Ovary (tissue), 10 donors: ENCODE measurements at regions of chr9 and their contacts with region 1.

Region 1: DNA sequence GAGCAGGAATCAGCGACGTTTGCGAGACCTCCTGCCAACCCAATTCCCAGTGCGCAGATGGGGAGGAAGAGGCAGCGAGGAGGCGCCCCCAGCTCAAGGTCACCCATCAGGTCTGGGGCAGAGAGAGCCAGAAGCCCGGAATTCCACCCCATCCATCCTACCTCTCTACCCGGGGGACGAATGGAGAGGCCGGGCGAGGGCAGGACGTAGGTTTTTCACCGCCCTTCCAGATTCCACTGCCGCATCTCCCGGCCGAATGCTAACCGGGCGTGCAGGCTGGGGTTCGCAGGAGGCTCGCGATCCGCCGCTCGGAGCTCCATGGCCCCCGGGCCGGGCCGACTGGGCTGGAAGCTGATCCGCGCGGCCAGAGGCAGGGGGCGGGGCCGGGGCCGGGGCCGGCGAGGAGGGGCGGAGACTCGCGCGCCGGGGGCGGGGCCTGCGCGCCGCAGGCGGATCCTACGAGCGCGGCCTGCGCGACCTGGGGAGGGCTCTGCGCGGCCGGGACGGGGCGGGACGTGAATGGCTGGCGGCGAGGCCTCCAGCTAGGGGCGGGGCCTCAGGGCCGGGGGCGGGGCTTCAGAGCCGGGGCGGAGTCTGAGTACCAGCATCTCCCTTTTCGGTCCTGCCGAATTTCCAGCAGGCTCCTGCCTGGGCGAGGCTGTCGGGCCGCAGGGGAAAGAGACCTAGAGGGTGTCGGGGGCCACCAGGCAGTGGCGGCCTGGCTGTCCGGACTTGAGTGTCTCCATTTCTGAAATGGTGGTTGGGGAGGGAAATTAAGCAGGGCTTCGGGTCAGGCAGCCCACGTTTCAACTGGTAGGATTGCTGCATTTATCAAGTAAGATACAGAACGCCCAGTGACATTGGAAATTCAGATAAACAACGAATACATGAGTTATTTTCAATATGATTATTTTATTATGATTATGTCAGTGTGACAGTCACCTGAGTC is at the start of gene ST6GALNAC4:
- DNase-seq: peak; percentile 94 to 98 (median 97)
- H3K4me3 ChIP-seq: peak within 1 kb of the TSS; percentile 76
- H3K27ac ChIP-seq: peak within 1 kb of the TSS; percentile 39 to 69
- H3K4me1 ChIP-seq: peaks cover 6% of the 10 kb centered on the region
- H3K27me3 ChIP-seq: no peaks in the 10 kb centered on the region
- CTCF ChIP-seq: no peak
- EP300 ChIP-seq: peak; percentile 9
- POLR2A ChIP-seq: peak; percentile 64
- total RNA-seq, gene ST6GALNAC4: 29.5 to 58.4 (median 46.4) TPM

Region 2: DNA sequence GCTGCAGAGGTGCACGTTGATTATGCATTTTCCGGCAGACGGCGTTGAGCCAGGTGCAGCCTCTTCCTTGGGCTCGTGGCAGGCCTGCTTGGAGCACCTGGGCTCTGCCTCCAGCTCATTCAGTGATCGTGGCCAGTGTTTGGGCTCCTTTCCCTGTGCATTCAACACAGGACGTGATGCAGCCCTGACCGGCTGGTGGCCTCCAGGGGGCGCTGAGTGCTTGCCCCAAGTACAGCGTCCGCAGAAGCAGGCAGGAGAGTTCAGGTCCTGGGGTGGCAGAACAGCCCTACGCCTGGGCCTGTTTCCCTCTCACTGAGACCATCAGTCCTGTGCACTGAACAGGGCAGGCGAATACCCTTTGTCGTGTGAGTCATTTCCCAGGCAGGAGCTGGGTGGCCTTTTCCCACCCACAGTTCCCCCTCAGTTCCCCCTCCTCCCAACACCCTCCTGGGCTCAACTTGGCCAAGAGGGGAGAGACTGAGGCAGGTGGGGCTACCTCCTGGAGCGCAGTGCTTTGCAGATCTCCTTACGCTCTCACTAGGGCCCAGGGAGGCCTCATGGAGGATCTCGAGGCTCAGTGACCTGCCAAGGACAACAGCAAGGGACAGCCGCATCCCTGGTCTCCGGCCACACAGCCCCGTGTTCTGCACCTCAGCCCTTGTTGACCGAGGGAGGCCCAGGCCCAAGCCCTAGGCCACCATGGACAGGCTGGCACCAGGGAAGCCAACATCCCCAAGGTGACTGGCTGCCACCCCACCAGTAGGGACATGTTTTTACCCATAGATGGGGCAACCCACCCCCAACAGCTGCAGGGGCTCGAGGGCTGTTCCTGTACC is 412.8 kb before region 1 on chr9:
- intact Hi-C with region 1: loop called in 3 of 4 experiments (anchors 5 to 10 kb)
- DNase-seq: peak; percentile 83 to 92 (median 89)
- H3K4me3 ChIP-seq: no peak overlapping the region
- H3K27ac ChIP-seq: peak overlapping the region in 1 of 2 donors; percentile 29
- H3K4me1 ChIP-seq: peaks cover 2% of the 10 kb centered on the region
- H3K27me3 ChIP-seq: no peaks in the 10 kb centered on the region
- CTCF ChIP-seq: peak; percentile 87 to 94 (median 92)
- EP300 ChIP-seq: no peak
- POLR2A ChIP-seq: no peak

Region 3: GRCh38 chr9:127734747-127735529 is 182.0 kb before region 1 on chr9 and contains the start of gene TOR2A:
- intact Hi-C with region 1: loop called (anchors 2 to 5 kb)
- DNase-seq: peak; percentile 95 to 98 (median 98)
- H3K4me3 ChIP-seq: peak within 1 kb of the TSS; percentile 88
- H3K27ac ChIP-seq: peak within 1 kb of the TSS; percentile 80 to 88
- H3K4me1 ChIP-seq: peaks cover 6% of the 10 kb centered on the region
- H3K27me3 ChIP-seq: no peaks in the 10 kb centered on the region
- CTCF ChIP-seq: peak; percentile 92 to 100 (median 100)
- EP300 ChIP-seq: no peak
- POLR2A ChIP-seq: peak; percentile 93
- total RNA-seq, gene TOR2A: 8.8 to 12.2 (median 9.9) TPM

Region 4: DNA sequence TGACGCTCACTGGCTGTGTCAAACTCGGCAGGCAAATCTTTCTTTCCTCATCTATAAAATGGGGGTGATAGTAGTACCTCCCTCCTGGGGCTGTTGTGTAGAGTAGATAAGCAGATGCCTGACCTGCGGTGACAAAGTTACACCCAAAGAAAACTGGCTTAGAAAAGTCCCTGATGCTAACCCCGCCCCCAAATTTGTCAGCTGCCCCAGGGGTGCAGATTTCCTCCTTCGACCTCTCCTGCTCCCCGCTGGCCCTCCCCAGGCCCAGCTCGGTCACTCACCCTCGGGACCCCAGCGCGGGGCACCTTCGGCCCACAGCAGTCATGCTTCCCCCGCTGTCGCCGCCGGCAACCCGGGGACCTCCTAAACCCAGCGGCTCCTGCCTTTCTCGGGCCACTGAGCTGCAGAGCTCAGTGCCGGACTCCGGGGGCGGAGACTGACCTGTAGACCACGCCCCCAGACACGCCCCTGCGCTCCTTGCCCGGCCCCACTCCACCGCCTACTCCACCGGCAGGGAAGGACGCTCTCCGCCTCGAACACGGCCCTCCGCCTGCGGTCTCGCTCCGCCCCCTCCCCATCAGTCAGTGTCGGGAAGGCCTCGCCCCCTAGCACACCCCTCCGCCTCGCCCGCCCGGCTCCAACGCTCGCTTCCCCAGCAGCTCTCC is 145.9 kb before region 1 on chr9:
- intact Hi-C with region 1: no loop called
- DNase-seq: peak; percentile 99
- H3K4me3 ChIP-seq: peak overlapping the region; percentile 50
- H3K27ac ChIP-seq: peak overlapping the region in 1 of 2 donors; percentile 26
- H3K4me1 ChIP-seq: peaks cover 7% of the 10 kb centered on the region
- H3K27me3 ChIP-seq: no peaks in the 10 kb centered on the region
- CTCF ChIP-seq: no peak
- EP300 ChIP-seq: no peak
- POLR2A ChIP-seq: no peak

Region 5: GRCh38 chr9:127785023-127785932 is 131.7 kb before region 1 on chr9:
- intact Hi-C with region 1: loop called in 2 of 4 experiments (anchors 5 kb)
- DNase-seq: peak; percentile 86 to 93 (median 92)
- H3K4me3 ChIP-seq: peak overlapping the region; percentile 100
- H3K27ac ChIP-seq: peak overlapping the region; percentile 95 to 96
- H3K4me1 ChIP-seq: peaks cover 11% of the 10 kb centered on the region
- H3K27me3 ChIP-seq: no peaks in the 10 kb centered on the region
- CTCF ChIP-seq: peak; percentile 92 to 96 (median 95)
- EP300 ChIP-seq: no peak
- POLR2A ChIP-seq: peak; percentile 11

Region 6: DNA sequence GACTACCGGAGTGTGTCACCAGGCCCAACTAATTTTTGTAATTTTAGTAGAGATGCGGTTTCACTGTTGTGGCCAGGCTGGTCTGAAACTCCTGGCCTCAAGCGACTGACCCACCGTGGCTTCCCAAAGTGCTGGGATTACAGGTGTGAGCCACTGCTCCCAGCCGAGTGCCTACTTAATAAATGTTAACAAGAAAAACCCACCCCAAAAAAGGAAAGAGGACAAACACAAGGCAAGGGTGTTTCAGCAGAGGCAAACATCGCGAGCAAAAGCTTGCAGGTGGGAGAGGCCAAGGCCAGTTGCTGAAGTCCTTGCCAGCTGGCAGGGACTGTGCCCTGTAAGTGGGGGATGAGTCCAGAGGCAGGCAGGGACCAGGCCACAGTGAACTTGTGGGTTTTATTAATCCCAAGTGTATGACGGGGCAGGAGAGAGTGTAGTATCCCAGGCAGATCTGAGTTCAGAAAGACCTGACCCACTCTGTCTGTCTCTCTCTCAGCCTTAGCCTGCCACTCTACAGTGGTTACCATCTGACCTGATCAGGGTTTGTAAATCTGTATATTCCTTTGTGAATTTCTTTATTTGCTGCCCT is 120.6 kb before region 1 on chr9:
- intact Hi-C with region 1: loop called in 1 of 4 experiments (anchors 5 kb)
- DNase-seq: peak; percentile 90 to 93 (median 92)
- H3K4me3 ChIP-seq: no peak overlapping the region
- H3K27ac ChIP-seq: peak overlapping the region; percentile 68 to 91
- H3K4me1 ChIP-seq: peaks cover 31% of the 10 kb centered on the region
- H3K27me3 ChIP-seq: no peaks in the 10 kb centered on the region
- CTCF ChIP-seq: no peak
- EP300 ChIP-seq: no peak
- POLR2A ChIP-seq: no peak

Region 7: GRCh38 chr9:128103589-128103962 is 186.6 kb after region 1 on chr9:
- intact Hi-C with region 1: no loop called
- DNase-seq: peak in 2 of 5 donors; percentile 41 to 45
- H3K4me3 ChIP-seq: no peak overlapping the region
- H3K27ac ChIP-seq: peak overlapping the region; percentile 52 to 63
- H3K4me1 ChIP-seq: peaks cover 47% of the 10 kb centered on the region
- H3K27me3 ChIP-seq: no peaks in the 10 kb centered on the region
- CTCF ChIP-seq: no peak
- EP300 ChIP-seq: no peak
- POLR2A ChIP-seq: no peak